ENCODE measurements at regions of chr13 and their contacts with region 1.

Region 1: DNA sequence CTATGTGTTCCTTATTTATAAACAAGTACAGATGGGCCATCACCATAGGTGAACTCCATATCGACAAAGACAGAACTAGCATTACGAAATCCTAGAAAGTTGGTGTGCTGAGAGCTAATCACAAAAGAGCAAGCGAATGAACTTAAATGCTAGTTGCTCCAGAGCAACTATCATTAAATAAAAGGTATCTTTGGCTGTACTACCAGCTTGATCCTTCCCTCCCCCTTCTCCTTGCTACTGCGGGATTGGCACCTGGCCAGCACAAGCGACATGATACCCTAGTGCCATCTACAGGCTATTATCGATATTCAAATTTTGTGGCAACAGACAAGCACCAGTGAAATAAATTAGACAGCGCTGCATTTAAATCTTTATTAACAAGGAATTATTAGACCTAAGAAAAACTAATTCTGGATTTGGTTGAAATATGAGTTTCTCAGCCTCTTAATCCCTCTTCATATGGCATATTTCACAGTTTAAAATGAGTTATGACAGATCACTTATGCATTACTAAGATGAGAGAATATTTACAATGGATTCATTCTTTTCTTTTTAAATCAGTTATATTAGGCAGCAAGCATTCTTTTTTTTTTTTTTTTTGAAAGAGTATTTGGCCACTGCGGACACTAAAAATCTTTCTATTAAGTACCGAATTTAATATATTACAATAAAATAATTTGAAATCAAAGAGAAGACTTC is 5.8 kb downstream of the PCDH9 start:
- DNase-seq: peak; percentile 66 to 71
- ATAC-seq: peak; percentile 72 to 91 (median 86)
- H3K4me3 ChIP-seq: peak overlapping the region in 9 of 10 donors; percentile 1 to 54 (median 39)
- H3K27ac ChIP-seq: peak overlapping the region in 5 of 10 donors; percentile 10 to 66 (median 26)
- H3K4me1 ChIP-seq: peaks cover 0 to 69% (median 13%) of the 10 kb centered on the region in 9 donors
- H3K27me3 ChIP-seq: peaks cover 0 to 16% (median 0%) of the 10 kb centered on the region in 7 donors
- CTCF ChIP-seq: peak; percentile 55 to 83 (median 73)

Region 2: GRCh38 chr13:65656740-65657329 is 1567.5 kb before region 1 on chr13:
- intact Hi-C with region 1: loop called in 3 of 10 experiments (anchors 10 kb)
- DNase-seq: no peak
- ATAC-seq: no peak
- H3K4me3 ChIP-seq: no peak overlapping the region
- H3K27ac ChIP-seq: no peak overlapping the region
- H3K4me1 ChIP-seq: no peaks in the 10 kb centered on the region
- H3K27me3 ChIP-seq: no peaks in the 10 kb centered on the region
- CTCF ChIP-seq: peak; percentile 4 to 66 (median 43)

Region 3: DNA sequence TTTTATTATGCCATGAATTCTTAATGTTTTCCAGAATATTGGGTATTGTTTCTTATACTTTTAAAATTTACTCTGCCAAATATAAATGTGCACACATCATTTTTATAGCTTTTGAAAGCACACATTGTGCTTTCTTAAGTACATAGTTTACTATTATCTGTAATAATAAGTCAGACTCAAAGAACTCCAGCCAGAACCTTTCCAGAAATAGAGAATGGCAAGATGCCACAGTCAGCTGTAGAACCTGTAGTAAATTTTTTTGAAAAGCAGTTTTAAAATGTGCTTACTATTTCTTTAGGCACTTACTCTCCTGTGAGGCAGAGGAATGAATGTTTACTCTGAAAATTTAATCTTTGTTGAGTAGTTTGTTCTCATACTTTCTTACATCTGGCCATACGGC is 1281.3 kb before region 1 on chr13:
- intact Hi-C with region 1: loop called in 1 of 10 experiments (anchors 10 kb)
- DNase-seq: no peak
- ATAC-seq: peak in 2 of 8 donors; percentile 32 to 35
- H3K4me3 ChIP-seq: peak overlapping the region in 3 of 10 donors; percentile 5 to 28 (median 6)
- H3K27ac ChIP-seq: peak overlapping the region in 2 of 10 donors; percentile 40 to 47
- H3K4me1 ChIP-seq: peaks cover 0 to 12% (median 0%) of the 10 kb centered on the region in 9 donors
- H3K27me3 ChIP-seq: no peaks in the 10 kb centered on the region
- CTCF ChIP-seq: no peak

Region 4: GRCh38 chr13:66689628-66690027 is 534.7 kb before region 1 on chr13:
- intact Hi-C with region 1: loop called in 4 of 10 experiments (anchors 5 to 10 kb)
- DNase-seq: no peak
- ATAC-seq: peak in 3 of 8 donors; percentile 47 to 65 (median 52)
- H3K4me3 ChIP-seq: no peak overlapping the region
- H3K27ac ChIP-seq: no peak overlapping the region
- H3K4me1 ChIP-seq: peaks cover 0 to 11% (median 0%) of the 10 kb centered on the region in 9 donors
- H3K27me3 ChIP-seq: no peaks in the 10 kb centered on the region
- CTCF ChIP-seq: peak in 6 of 9 donors; percentile 18 to 58 (median 34)

Region 5: DNA sequence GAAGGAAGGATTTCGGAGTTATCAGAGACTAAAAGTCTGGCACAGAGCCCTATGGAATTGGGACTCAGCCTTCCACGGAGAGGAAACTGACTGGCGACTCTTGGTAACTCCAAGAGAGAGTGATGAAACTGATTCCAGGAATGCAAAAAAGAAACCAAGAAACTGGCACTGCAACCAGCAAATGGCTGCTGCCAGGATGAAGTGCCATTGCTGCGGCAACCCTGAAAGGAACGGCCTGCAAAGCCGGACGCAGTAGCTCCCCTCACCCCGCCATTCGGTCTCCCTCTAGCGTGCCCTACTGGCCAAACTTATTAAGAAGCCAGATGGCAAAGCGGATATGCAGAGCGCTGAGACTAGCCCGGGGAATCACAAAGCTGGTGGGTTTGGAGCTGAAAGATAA is 230.2 kb before region 1 on chr13:
- intact Hi-C with region 1: loop called in 2 of 10 experiments (anchors 5 to 10 kb)
- DNase-seq: peak; percentile 50 to 75
- ATAC-seq: peak; percentile 91 to 99 (median 96)
- H3K4me3 ChIP-seq: peak overlapping the region in 9 of 10 donors; percentile 11 to 49 (median 42)
- H3K27ac ChIP-seq: peak overlapping the region in 1 of 10 donors; percentile 22
- H3K4me1 ChIP-seq: peaks cover 0 to 14% (median 6%) of the 10 kb centered on the region in 9 donors
- H3K27me3 ChIP-seq: no peaks in the 10 kb centered on the region
- CTCF ChIP-seq: peak in 8 of 9 donors; percentile 24 to 75 (median 64)

Region 6: DNA sequence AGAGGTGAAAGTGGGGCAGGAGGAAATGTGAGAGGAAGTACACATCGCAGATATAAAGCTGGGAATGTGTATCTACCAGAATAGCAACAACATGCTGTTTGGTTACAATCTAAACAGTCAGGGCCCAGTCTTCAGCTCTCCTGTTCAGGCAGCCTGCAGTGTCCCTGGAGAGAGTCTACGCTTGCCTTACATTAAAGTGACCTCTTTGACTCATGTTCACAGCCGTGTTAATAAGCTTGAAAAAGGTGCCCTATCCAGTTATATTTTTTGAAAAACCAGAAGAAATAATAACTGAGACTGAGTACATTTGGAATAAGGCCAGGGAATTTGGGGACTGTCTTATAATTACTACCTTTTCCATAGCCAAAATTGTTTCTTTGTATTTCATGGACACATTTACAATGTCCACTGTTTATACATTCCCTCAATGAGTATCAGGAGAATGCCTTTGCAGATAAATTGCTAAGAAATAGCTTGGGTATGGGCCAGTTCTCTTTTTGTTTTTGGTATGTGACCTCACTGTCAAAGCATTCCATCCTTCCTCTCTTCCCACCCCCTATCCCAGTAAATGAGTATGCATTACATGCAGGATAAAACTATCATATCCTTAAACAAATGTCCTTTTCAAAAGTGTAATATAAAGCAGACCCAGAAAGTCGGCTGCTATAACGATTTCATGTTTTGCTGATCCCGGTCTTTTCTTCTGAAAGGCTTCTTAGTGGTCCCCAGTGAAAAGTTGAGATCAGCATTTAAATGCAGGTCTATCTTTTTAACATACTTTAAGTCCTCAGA is 76.8 kb before region 1 on chr13:
- intact Hi-C with region 1: loop called in 1 of 10 experiments (anchors 5 kb)
- DNase-seq: peak in 1 of 2 donors; percentile 15
- ATAC-seq: peak; percentile 71 to 94 (median 87)
- H3K4me3 ChIP-seq: peak overlapping the region in 6 of 10 donors; percentile 4 to 29 (median 21)
- H3K27ac ChIP-seq: peak overlapping the region; percentile 38 to 85 (median 76)
- H3K4me1 ChIP-seq: peaks cover 0 to 54% (median 31%) of the 10 kb centered on the region in 9 donors
- H3K27me3 ChIP-seq: no peaks in the 10 kb centered on the region
- CTCF ChIP-seq: no peak